Activated B cell treated with CpG ODN at 0.5 μM for 24 hours (primary cell): ENCODE measurements at regions of chr7 and their contacts with region 1.

Region 1: GRCh38 chr7:131688738-131689661 is 132.6 kb upstream of the PODXL start:
- DNase-seq: peak; percentile 36
- ATAC-seq: peak; percentile 64
- H3K4me3 Mint-ChIP-seq: no peak overlapping the region
- H3K27ac Mint-ChIP-seq: no peak overlapping the region
- H3K4me1 Mint-ChIP-seq: no peaks in the 10 kb centered on the region
- H3K27me3 Mint-ChIP-seq: peaks cover 37% of the 10 kb centered on the region
- CTCF ChIP-seq: peak; percentile 75

Region 2: DNA sequence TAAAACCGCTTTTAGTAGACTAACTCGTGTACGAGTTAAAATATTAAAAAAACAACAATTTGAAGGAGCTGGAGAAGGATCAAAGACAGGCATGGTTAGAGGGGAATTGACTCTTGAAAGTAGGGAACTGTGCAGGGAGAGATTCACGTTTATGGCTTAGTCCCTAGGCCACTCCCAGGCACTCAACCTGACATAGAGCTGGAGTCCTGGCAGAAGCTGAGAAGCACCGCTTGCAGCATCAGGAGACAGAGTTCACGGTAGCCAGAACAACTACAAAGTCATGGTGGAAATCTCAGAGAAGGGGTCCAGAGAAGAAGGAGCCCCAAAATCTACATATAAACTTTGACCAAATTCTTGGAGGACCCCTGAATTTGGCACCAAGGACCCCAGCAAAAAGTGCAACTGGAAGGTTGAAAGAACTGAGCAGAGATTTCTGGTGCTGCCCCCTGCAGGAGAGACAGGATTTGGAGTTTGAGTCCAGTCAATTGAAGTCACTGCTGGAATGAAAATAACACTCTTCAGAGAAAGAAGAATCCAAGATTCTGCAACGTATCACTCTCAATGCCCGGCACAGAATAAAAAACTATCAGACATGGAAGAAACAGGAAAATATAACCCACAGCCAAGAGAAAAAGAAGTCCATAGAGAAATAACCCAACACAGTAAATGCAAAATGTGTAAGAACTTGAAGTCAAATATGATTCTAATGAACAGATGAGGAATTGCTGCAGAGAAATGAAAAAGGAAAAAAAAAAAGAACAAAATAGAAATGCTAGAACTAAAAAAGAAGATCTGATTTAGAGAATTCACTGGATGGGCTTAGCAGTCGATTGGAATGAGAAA is 360.7 kb after region 1 on chr7:
- CTCF ChIA-PET with region 1: no interaction called
- POLR2A ChIA-PET with region 1: no interaction called
- intact Hi-C with region 1: loop called (anchors 5 kb)
- DNase-seq: no peak
- ATAC-seq: no peak
- H3K4me3 Mint-ChIP-seq: no peak overlapping the region
- H3K27ac Mint-ChIP-seq: no peak overlapping the region
- H3K4me1 Mint-ChIP-seq: no peaks in the 10 kb centered on the region
- H3K27me3 Mint-ChIP-seq: peaks cover 5% of the 10 kb centered on the region
- CTCF ChIP-seq: no peak

Region 3: GRCh38 chr7:133434055-133434865 is 1745.3 kb after region 1 on chr7:
- CTCF ChIA-PET with region 1: interaction called, 3 read pairs
- POLR2A ChIA-PET with region 1: no interaction called
- intact Hi-C with region 1: loop called (anchors 5 kb)
- DNase-seq: no peak
- ATAC-seq: no peak
- H3K4me3 Mint-ChIP-seq: no peak overlapping the region
- H3K27ac Mint-ChIP-seq: no peak overlapping the region
- H3K4me1 Mint-ChIP-seq: peaks cover 2% of the 10 kb centered on the region
- H3K27me3 Mint-ChIP-seq: no peaks in the 10 kb centered on the region
- CTCF ChIP-seq: no peak